WTC11 (cell line): ENCODE measurements at regions of chr6 and their contacts with region 1.

Region 1: DNA sequence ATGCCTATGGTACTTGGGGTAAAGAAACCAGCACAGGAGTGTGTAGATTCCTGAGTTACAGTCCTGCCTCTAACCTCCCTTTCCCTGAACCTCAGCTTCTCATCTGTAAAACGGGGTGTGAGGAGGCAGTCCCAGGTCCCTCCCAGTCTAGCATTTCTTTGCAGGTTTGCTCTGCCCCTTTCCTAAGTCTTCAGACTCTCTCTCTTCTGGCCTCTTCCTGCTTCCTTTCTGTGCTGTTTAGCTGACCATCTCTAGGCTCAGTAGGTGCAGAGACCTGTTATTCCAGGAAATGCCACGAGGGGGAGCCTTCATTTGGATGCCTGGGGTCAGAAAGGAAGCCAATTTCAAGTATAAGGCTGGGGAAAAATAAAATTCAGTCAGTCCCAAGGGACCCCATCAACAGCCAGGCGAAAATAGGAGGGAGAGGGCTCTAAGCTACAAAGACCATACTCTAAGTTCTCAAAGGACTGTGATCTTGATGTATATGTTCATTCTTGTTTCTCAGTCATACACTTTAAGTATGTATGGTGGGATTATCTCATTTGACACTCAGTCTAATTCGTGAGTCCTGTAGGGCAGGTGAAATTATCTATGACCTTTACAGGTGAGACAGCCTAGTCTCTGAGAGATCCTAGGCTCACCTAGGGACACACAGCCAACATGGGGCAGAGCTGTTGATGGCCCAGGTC is 89.1 kb downstream of the NCR2 start:
- DNase-seq: peak; percentile 91
- ATAC-seq: peak; percentile 33
- H3K4me3 Mint-ChIP-seq: no peak overlapping the region
- H3K27ac Mint-ChIP-seq: no peak overlapping the region
- H3K4me1 Mint-ChIP-seq: peaks cover 9% of the 10 kb centered on the region
- H3K27me3 Mint-ChIP-seq: peaks cover 50% of the 10 kb centered on the region
- CTCF ChIP-seq: peak; percentile 80

Region 2: DNA sequence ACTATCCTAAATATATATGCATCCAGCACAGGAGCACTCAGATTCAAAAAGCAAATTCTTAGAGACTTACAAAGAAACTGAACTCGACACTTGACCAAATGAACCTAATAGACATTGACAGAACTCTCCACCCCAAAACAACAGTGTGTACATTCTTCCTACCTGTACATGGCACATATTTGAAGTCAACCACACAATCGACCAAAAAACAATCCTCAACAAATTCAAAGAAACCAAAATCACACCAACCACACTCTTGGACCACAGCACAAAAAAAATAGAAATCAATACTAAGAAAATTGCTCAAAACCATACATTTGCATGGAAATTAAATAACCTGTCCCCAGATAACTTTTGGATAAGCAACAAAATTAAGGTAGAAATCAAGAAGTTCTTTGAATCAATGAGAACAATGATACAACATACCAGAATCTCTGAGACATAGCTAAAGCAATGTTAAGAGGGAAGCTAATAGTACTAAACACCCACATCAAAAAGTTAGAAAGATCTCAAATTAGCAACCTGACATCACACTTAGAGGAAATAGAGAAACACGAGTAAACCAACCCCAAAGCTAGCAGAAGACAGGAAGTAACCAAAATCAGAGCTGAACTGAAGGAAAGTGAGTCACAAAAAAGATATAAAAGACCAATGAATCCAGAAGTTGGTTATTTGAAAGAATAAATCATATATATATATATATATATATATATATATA is 125.6 kb before region 1 on chr6:
- CTCF ChIA-PET with region 1: no interaction called
- POLR2A ChIA-PET with region 1: no interaction called
- DNase-seq: no peak
- ATAC-seq: no peak
- H3K4me3 Mint-ChIP-seq: no peak overlapping the region
- H3K27ac Mint-ChIP-seq: no peak overlapping the region
- H3K4me1 Mint-ChIP-seq: peaks cover 12% of the 10 kb centered on the region
- H3K27me3 Mint-ChIP-seq: peaks cover 17% of the 10 kb centered on the region
- CTCF ChIP-seq: no peak

Region 3: DNA sequence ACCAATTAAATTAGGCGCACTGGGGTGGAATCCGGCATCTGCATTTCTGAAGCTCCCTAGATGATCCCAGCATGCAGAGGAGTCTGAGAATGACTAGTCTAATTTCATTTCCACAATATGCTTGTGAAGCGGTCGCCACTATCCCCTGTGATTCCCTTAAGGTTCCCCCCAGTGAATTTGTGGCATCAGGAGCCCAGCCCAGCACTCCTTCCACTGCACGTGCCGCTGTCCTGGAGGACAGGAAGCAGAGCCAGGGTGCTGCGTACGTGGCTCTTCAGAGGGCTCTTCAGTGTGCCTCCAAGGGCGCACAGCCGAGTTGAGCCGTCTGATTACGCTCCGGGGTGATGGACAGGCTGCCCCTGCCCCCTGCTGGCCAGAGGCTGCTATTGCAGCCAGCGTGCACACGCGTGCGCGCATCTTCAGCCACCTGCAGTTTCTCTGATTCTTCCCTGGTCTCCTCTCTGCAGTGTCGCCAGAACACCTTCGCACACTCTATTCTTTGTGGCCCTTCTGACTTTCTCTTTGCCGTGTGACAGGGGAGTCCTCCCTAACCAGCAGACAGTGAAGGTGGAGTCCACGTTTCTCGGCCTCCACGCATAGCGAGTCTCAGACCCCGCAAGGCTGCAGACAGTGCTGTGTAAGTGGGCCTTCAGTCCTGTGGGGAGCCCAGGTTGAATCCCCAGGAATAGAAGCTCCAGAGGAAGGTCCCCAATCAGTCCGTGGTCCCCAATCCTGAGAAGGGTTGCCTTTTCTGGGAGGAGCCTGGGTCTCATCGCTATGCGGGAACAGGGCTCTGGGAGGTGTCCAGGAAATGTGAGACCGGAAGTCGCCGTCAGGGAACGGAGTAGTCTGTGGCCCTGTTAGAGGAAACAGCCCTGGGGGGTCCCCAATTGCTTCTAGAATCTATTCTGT is 105.6 kb before region 1 on chr6:
- CTCF ChIA-PET with region 1: no interaction called
- POLR2A ChIA-PET with region 1: no interaction called
- DNase-seq: peak; percentile 85
- ATAC-seq: peak; percentile 96
- H3K4me3 Mint-ChIP-seq: peak overlapping the region; percentile 58
- H3K27ac Mint-ChIP-seq: no peak overlapping the region
- H3K4me1 Mint-ChIP-seq: peaks cover 20% of the 10 kb centered on the region
- H3K27me3 Mint-ChIP-seq: peaks cover 15% of the 10 kb centered on the region
- CTCF ChIP-seq: peak; percentile 100

Region 4: DNA sequence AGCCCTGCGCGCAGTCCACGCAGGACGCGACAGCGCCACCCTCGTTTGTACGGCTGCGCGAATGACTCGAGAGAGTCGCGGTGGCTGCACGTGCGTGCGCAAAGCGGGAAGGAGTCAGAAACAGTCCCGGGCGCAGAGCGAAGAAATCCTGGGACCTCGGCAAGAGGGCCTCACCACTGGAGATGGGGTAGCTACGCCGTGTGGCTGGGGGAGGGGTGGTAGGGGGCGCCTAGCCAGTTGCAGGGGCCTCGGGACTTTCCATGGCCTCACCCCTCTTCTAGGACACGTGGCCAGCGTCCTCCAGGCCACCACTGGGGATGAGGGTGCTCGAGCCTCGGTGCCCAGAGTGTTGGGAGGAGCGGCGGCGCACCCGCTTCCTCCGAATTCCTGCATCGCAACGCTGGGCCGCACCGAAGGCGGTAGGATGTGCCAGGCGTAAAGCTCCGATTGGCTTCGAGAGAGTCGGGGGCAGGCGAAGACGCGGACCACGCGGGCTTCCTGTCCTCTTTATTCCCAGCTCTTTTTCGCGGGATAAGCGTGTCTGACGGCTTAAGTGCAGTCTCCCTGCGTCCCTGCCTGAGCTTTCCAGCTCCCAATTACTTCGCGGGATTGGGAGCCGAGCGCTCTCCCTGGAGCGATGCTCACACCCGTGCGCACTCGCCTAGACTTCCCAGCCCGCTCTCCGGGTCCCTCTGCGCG is 50.4 kb before region 1 on chr6:
- CTCF ChIA-PET with region 1: interaction called, 11 read pairs
- POLR2A ChIA-PET with region 1: no interaction called
- DNase-seq: peak; percentile 72
- ATAC-seq: peak; percentile 29
- H3K4me3 Mint-ChIP-seq: peak overlapping the region; percentile 65
- H3K27ac Mint-ChIP-seq: no peak overlapping the region
- H3K4me1 Mint-ChIP-seq: peaks cover 50% of the 10 kb centered on the region
- H3K27me3 Mint-ChIP-seq: peaks cover 99% of the 10 kb centered on the region
- CTCF ChIP-seq: no peak

Region 5: DNA sequence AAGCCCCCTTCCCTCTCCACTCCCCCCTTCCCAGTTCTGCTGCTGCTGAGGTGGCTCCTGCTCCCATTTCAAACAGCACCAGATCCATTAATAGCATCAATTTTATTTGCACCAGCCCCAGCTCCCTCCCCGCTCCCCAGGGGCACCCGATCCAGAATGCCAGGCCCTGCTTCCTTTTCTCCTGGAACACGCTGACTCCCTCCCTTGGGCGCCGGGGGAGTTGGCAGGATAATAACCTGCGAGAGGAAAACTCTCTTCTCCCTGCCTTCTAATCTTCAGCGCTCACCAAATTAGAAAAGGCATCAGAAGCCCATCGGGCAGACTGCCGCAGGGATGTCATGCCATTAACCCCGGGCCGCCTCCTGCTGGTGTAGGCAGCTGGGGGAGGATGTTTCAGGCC is 11.3 kb before region 1 on chr6:
- CTCF ChIA-PET with region 1: interaction called, 24 read pairs
- POLR2A ChIA-PET with region 1: interaction called, 6 read pairs
- DNase-seq: no peak
- ATAC-seq: no peak
- H3K4me3 Mint-ChIP-seq: no peak overlapping the region
- H3K27ac Mint-ChIP-seq: no peak overlapping the region
- H3K4me1 Mint-ChIP-seq: peaks cover 32% of the 10 kb centered on the region
- H3K27me3 Mint-ChIP-seq: peaks cover 100% of the 10 kb centered on the region
- CTCF ChIP-seq: no peak

Region 6: GRCh38 chr6:41455818-41456217 is 31.3 kb after region 1 on chr6:
- CTCF ChIA-PET with region 1: interaction called, 10 read pairs
- POLR2A ChIA-PET with region 1: no interaction called
- DNase-seq: no peak
- ATAC-seq: no peak
- H3K4me3 Mint-ChIP-seq: no peak overlapping the region
- H3K27ac Mint-ChIP-seq: no peak overlapping the region
- H3K4me1 Mint-ChIP-seq: peaks cover 38% of the 10 kb centered on the region
- H3K27me3 Mint-ChIP-seq: peaks cover 9% of the 10 kb centered on the region
- CTCF ChIP-seq: no peak

Region 7: GRCh38 chr6:41584668-41585205 is 160.2 kb after region 1 on chr6:
- CTCF ChIA-PET with region 1: interaction called, 11 read pairs
- POLR2A ChIA-PET with region 1: no interaction called
- DNase-seq: peak; percentile 84
- ATAC-seq: peak; percentile 90
- H3K4me3 Mint-ChIP-seq: no peak overlapping the region
- H3K27ac Mint-ChIP-seq: no peak overlapping the region; the same call in 1 of the 2 replicates
- H3K4me1 Mint-ChIP-seq: peaks cover 67% of the 10 kb centered on the region
- H3K27me3 Mint-ChIP-seq: no peaks in the 10 kb centered on the region
- CTCF ChIP-seq: no peak

Region 8: GRCh38 chr6:41659935-41660505 is 235.5 kb after region 1 on chr6:
- CTCF ChIA-PET with region 1: no interaction called
- POLR2A ChIA-PET with region 1: no interaction called
- DNase-seq: no peak
- ATAC-seq: no peak
- H3K4me3 Mint-ChIP-seq: no peak overlapping the region
- H3K27ac Mint-ChIP-seq: no peak overlapping the region
- H3K4me1 Mint-ChIP-seq: peaks cover 20% of the 10 kb centered on the region
- H3K27me3 Mint-ChIP-seq: peaks cover 11% of the 10 kb centered on the region
- CTCF ChIP-seq: no peak